H1 (cell line): ENCODE measurements at regions of chr1 and their contacts with region 1.

Region 1: GRCh38 chr1:67766141-67766978 is 66.9 kb downstream of the GNG12 start:
- DNase-seq: peak in 1 of 2 experiments; percentile 66
- H3K4me3 ChIP-seq: peak overlapping the region in 1 of 4 experiments; percentile 49; a peak in 3 of 8 replicates
- H3K27ac ChIP-seq: no peak overlapping the region
- H3K4me1 ChIP-seq: peaks cover 0 to 4% (median 3%) of the 10 kb centered on the region in 4 experiments; a peak in 4 of 7 replicates
- H3K27me3 ChIP-seq: no peaks in the 10 kb centered on the region
- CTCF ChIP-seq: peak in 2 of 3 experiments; percentile 67 to 74; a peak in 3 of 4 replicates
- EP300 ChIP-seq: no peak
- POLR2A ChIP-seq: no peak
- RAD21 ChIP-seq: peak; percentile 75 to 83

Region 2: DNA sequence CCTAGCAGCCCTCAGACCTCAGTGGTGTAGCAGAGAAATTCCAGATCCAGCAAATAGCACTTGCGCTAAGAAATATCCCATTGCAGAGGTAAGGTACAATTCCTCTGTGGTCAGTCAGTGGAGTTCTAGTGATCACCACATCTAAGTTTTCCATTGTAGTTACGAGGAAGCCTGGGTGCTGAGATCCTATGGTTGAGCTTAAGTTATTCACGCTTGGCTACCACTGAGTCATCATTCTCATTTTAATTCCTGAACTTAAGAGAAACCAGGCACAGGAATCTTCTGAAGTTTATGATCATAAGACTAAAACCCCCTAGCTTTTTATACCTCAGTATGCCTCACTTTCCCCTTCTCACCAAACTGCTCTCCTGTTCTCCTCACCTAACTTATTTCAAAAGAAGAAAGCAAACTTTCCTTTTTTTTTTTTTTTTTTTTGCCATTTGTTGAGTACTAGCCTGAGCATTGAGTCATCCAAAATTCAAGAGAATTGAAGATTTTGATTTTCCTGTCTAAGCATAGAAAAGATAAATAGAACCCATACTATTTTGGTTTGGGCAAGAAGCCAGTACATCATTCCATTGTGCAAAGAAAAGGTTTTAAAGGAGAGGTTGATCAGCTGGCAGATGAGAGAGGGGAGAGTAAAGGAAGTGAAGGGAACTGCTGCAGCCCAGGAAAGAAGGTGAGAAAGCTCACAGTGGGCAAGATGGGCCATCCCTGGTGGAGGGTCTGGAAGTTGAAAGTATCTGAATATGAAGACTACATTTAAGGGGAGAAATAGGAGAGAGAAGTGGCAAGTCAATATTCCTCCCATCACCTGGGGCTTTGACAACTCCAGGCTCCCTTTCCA is 376.1 kb before region 1 on chr1:
- CTCF ChIA-PET with region 1: no interaction called
- POLR2A ChIA-PET with region 1: no interaction called
- DNase-seq: no peak
- H3K4me3 ChIP-seq: no peak overlapping the region
- H3K27ac ChIP-seq: no peak overlapping the region
- H3K4me1 ChIP-seq: peaks cover 2 to 9% (median 4%) of the 10 kb centered on the region in 4 experiments; a peak in 6 of 7 replicates
- H3K27me3 ChIP-seq: no peaks in the 10 kb centered on the region
- CTCF ChIP-seq: no peak
- EP300 ChIP-seq: no peak
- POLR2A ChIP-seq: no peak
- RAD21 ChIP-seq: no peak

Region 3: GRCh38 chr1:67561704-67562113 is 204.7 kb before region 1 on chr1:
- CTCF ChIA-PET with region 1: interaction called, 146 read pairs
- POLR2A ChIA-PET with region 1: no interaction called
- DNase-seq: peak; percentile 54 to 98
- H3K4me3 ChIP-seq: no peak overlapping the region
- H3K27ac ChIP-seq: no peak overlapping the region
- H3K4me1 ChIP-seq: no peaks in the 10 kb centered on the region
- H3K27me3 ChIP-seq: no peaks in the 10 kb centered on the region
- CTCF ChIP-seq: peak; percentile 86 to 92 (median 91)
- EP300 ChIP-seq: no peak
- POLR2A ChIP-seq: no peak
- RAD21 ChIP-seq: peak; percentile 94 to 95

Region 4: DNA sequence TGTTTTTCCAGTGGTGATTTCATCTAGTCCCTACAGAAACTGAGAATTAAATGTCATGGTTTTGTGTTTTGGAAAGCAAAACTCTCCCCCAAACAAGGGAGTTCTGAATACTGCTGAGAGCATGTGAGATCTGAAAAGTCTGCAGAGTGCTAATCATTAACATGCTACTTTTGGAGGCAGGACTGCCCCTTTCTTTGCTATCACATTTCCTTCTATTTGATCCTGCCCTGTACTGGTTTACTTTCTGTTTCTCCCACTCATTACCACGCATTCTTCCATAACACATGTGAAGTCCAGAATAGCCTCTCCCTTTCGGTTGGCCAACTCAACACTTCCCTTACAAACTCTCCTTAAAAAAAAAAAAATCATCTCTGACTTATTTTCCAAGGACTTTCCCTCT is 17.7 kb before region 1 on chr1:
- CTCF ChIA-PET with region 1: interaction called, 156 read pairs
- POLR2A ChIA-PET with region 1: interaction called, 3 read pairs
- DNase-seq: no peak
- H3K4me3 ChIP-seq: peak overlapping the region in 1 of 4 experiments; percentile 44; a peak in 2 of 8 replicates
- H3K27ac ChIP-seq: no peak overlapping the region
- H3K4me1 ChIP-seq: peaks cover 9 to 38% (median 33%) of the 10 kb centered on the region in 4 experiments; a peak in 6 of 7 replicates
- H3K27me3 ChIP-seq: no peaks in the 10 kb centered on the region
- CTCF ChIP-seq: no peak
- EP300 ChIP-seq: no peak
- POLR2A ChIP-seq: no peak
- RAD21 ChIP-seq: no peak

Region 5: DNA sequence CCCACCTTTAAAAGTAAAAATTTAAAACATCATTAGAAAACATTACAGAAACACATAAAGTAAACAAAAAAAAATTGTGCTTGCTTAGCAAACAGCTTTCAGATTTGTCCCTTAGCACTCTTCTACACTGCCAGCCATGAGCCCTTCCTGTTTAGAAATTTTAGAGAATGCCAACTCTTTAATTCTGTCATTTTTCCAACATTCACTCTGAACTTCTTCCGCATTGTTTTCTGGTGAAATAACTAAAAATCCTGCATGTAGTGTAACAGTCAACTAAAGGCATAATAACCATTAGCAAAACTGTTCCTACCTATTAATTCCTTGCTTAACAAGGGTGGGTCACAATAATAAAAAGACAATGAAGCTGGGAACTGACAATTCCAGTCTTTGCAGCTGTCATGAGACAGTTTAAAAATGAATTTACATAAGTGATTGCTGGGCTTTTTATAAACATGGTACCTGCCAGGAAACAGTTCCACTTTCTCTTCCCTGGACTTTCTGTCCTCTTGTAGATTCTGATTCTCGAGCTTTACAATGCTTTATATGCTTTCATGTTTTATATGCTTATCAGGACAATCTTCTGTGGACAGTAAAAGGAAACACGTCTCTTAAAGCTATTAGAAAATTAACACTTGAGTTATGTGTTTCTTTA is 47.9 kb after region 1 on chr1:
- CTCF ChIA-PET with region 1: interaction called, 26 read pairs
- POLR2A ChIA-PET with region 1: no interaction called
- DNase-seq: no peak
- H3K4me3 ChIP-seq: no peak overlapping the region
- H3K27ac ChIP-seq: no peak overlapping the region
- H3K4me1 ChIP-seq: no peaks in the 10 kb centered on the region; a peak in 3 of 7 replicates
- H3K27me3 ChIP-seq: no peaks in the 10 kb centered on the region
- CTCF ChIP-seq: no peak
- EP300 ChIP-seq: no peak
- POLR2A ChIP-seq: no peak
- RAD21 ChIP-seq: no peak

Region 6: GRCh38 chr1:67844988-67845387 is 78.6 kb after region 1 on chr1:
- CTCF ChIA-PET with region 1: interaction called, 69 read pairs
- POLR2A ChIA-PET with region 1: no interaction called
- DNase-seq: no peak
- H3K4me3 ChIP-seq: no peak overlapping the region
- H3K27ac ChIP-seq: no peak overlapping the region
- H3K4me1 ChIP-seq: peaks cover 0 to 16% (median 10%) of the 10 kb centered on the region in 4 experiments; a peak in 5 of 7 replicates
- H3K27me3 ChIP-seq: no peaks in the 10 kb centered on the region
- CTCF ChIP-seq: no peak
- EP300 ChIP-seq: no peak
- POLR2A ChIP-seq: no peak
- RAD21 ChIP-seq: no peak

Region 7: GRCh38 chr1:67880056-67880601 is 113.8 kb after region 1 on chr1:
- CTCF ChIA-PET with region 1: no interaction called
- POLR2A ChIA-PET with region 1: no interaction called
- DNase-seq: no peak
- H3K4me3 ChIP-seq: no peak overlapping the region
- H3K27ac ChIP-seq: no peak overlapping the region
- H3K4me1 ChIP-seq: no peaks in the 10 kb centered on the region
- H3K27me3 ChIP-seq: no peaks in the 10 kb centered on the region
- CTCF ChIP-seq: no peak
- EP300 ChIP-seq: no peak
- POLR2A ChIP-seq: no peak
- RAD21 ChIP-seq: no peak

Region 8: DNA sequence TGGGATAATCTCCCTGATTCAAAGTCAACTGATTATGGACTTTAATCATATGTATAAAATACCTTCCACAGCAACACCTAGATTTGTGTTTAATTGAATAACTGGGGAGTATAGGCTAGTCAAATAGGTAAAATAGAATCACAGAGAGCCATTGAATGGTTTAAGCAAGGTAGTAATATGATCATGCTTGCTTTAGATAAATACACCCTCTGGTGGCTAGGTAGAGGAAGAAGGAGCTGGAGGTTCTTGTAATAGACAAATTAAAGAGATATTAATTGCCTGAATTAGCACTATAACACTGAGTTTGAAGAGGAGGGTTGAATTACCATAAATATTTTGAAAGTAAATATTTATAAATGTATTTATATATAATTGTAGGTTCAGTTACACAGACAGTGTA is 243.7 kb after region 1 on chr1:
- CTCF ChIA-PET with region 1: interaction called, 33 read pairs
- POLR2A ChIA-PET with region 1: no interaction called
- DNase-seq: no peak
- H3K4me3 ChIP-seq: no peak overlapping the region
- H3K27ac ChIP-seq: no peak overlapping the region
- H3K4me1 ChIP-seq: no peaks in the 10 kb centered on the region
- H3K27me3 ChIP-seq: no peaks in the 10 kb centered on the region
- CTCF ChIP-seq: peak in 2 of 3 experiments; percentile 24 to 36; a peak in 2 of 4 replicates
- EP300 ChIP-seq: no peak
- POLR2A ChIP-seq: no peak
- RAD21 ChIP-seq: peak; percentile 56 to 60